ENCODE measurements at regions of chr14 and their contacts with region 1.

Region 1: DNA sequence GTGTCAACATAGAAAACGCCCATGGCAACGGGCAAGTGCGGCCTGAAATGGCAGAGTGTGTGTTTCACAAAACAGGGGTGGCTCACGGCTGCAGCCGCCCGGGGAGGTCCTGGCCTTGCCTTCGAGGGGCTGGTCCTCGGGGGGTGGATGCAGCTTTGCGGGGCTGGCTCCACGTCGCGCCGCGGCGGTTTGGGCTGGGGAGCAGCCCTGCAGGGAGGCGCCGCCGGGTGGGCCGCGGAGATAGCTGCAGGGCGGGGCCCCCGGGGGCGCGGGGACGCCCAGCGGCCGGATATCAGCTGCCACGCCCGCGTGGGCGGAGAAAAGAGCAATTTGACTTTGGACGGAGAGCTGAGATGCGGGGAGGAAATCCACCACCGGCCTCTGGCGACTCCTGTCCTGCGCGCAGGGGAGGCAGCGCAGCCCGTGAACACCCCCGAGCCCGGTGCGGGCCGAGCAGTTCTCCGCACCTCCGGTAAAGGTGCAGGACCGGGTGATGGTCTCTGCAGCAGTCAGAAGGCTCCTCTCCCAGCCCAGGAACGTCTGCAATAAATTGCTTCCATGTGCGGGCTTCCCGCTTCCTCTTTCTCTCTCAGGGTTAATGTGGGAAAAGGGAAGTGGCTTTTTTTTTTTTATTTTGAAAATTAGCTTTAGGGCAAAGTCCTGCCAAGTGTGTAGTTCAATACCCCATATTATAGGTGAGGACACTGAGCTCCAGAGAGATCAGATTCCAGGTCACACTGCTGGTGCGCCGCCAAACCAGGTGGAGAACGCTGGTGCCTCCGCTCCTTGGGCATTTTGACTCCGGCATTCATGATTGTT is 110.5 kb downstream of the ARF6 start:
- DNase-seq: peak; percentile 92
- ATAC-seq: peak; percentile 76

Region 2: DNA sequence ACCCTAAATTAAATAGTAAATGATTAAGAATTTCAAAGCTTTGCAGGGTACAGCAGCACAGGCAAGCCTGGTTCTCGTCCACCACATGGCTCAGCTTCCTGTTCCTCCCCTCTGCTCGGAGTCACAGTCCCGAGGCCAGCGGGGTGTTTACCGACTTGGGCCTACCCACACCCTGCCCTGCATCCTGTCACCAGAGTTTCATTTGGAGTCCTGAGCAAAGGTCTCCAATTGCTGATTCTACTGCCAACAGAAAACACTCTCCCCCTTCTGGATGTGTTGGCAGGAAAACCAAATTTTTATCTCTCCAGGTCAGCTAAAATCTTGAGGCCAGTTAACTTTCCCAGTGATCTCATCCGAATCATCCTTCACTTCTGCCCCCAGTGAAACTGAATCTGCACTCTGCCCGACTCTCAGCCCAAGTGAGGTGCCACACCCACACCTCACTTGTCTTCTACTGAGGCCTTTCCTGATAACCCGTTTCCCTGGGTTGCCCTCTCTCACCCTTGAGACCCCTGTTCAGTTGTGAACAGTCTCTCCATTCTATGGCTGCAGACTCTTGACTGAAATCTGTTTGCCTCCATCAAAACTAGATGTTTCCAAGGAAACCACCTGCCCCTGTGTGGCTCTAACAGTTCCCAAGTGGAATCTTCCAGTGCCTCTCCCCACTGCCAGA is 41.8 kb after region 1 on chr14:
- intact Hi-C with region 1: loop called (anchors 5 kb)
- DNase-seq: peak; percentile 83
- ATAC-seq: peak; percentile 89

Region 3: GRCh38 chr14:50109342-50109741 is 105.9 kb after region 1 on chr14:
- intact Hi-C with region 1: loop called (anchors 5 kb)
- DNase-seq: no peak
- ATAC-seq: no peak